Activated CD4-positive, alpha-beta memory T cell treated with anti-CD3 and anti-CD28 coated beads for 36 hours (primary cell): ENCODE measurements at regions of chr19 and their contacts with region 1.

Region 1: DNA sequence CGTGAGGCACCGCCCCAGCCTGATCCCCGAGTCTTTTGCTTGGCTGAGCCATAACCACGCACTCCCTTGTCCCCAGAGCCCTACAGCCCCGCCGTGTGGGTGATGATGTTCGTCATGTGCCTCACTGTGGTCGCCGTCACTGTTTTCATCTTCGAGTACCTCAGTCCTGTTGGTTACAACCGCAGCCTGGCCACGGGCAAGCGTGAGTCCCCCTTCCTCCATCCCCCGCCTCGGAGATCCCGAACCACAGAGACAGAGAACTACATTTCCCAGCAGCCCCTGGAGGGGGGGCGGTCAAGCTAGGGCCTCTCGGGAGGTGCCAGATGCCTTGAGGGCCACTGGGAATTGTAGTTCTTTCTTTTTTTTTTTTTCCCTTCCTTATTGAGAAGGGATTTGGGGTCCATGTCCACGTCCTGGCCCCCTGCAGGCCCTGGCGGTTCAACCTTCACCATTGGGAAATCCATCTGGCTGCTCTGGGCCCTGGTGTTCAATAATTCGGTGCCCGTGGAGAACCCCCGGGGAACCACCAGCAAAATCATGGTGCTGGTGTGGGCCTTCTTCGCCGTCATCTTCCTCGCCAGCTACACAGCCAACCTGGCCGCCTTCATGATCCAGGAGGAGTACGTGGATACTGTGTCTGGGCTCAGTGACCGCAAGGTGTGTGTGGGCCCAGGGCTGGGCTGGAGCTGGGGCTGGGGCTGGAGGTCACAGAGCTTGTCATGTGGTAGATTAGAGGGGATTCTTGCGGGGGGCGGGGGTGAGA is 25.9 kb downstream of the GRIN2D start:
- DNase-seq: peak; percentile 87
- H3K4me3 Mint-ChIP-seq: peak overlapping the region; percentile 67
- H3K27ac Mint-ChIP-seq: peak overlapping the region; percentile 19
- H3K4me1 Mint-ChIP-seq: peaks cover 27% of the 10 kb centered on the region
- H3K27me3 Mint-ChIP-seq: peaks cover 9% of the 10 kb centered on the region

Region 2: GRCh38 chr19:48391107-48391986 is 28.0 kb before region 1 on chr19 and contains the start of gene KDELR1:
- CTCF ChIA-PET with region 1: interaction called, 15 read pairs
- POLR2A ChIA-PET with region 1: no interaction called
- intact Hi-C with region 1: no loop called
- DNase-seq: peak; percentile 80
- H3K4me3 Mint-ChIP-seq: peak within 1 kb of the TSS; percentile 90
- H3K27ac Mint-ChIP-seq: peak within 1 kb of the TSS; percentile 87
- H3K4me1 Mint-ChIP-seq: peaks cover 25% of the 10 kb centered on the region
- H3K27me3 Mint-ChIP-seq: peaks cover 23% of the 10 kb centered on the region
- total RNA-seq, gene KDELR1: 82.9 to 88.1 TPM

Region 3: GRCh38 chr19:48398375-48399235 is 20.7 kb before region 1 on chr19:
- CTCF ChIA-PET with region 1: interaction called, 3 read pairs
- POLR2A ChIA-PET with region 1: no interaction called
- intact Hi-C with region 1: loop called (anchors 2 kb)
- DNase-seq: peak; percentile 92
- H3K4me3 Mint-ChIP-seq: peak overlapping the region; percentile 76
- H3K27ac Mint-ChIP-seq: peak overlapping the region; percentile 29
- H3K4me1 Mint-ChIP-seq: peaks cover 32% of the 10 kb centered on the region
- H3K27me3 Mint-ChIP-seq: peaks cover 31% of the 10 kb centered on the region

Region 4: GRCh38 chr19:48468775-48469288 is 49.5 kb after region 1 on chr19:
- CTCF ChIA-PET with region 1: no interaction called
- POLR2A ChIA-PET with region 1: no interaction called
- intact Hi-C with region 1: loop called (anchors 2 kb)
- DNase-seq: peak; percentile 100
- H3K4me3 Mint-ChIP-seq: peak overlapping the region; percentile 83
- H3K27ac Mint-ChIP-seq: peak overlapping the region; percentile 84
- H3K4me1 Mint-ChIP-seq: peaks cover 22% of the 10 kb centered on the region
- H3K27me3 Mint-ChIP-seq: no peaks in the 10 kb centered on the region